GM12878 (cell line): ENCODE measurements at regions of chr18 and their contacts with region 1.

Region 1: DNA sequence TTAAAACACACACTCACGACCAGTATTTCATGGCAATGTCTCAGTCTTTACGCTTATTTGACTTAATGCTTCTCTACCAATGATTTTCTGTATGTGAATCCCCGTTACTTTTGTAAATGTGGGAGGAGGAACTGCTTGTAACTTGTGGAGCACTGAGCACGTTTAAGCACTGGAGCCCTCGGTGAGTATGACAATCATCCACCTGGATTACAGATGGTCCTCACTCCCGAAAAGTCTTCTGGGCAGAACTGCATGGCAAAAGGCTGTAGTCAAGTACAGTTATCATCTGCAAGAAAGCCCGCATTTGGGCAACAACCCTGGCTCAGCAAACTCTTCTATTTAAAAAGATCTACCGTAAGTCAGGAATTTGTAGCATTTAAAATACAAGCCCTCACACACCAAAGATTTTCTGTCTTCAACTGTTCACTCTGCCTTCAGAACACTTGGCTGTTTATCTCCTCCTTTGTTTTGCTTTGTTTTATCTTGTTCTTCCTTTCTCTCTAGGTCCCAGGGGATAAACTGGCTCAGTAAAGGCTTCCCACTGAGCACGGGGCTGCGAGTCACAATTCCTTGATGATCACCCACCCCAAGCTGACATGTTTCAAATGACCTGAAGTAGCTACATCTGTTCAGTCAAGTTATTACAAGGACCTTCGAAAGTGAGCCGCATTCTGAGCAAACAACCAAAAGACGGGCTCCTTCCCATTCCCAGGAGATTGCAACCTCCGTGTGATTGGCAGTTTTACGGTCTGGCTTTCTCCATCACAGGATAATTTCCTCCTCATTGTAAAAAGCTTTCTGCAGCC is 102.2 kb downstream of the DLGAP1 start:
- DNase-seq: no peak
- ATAC-seq: peak; percentile 8
- H3K4me3 ChIP-seq: no peak overlapping the region
- H3K27ac ChIP-seq: no peak overlapping the region
- H3K4me1 ChIP-seq: no peaks in the 10 kb centered on the region
- H3K27me3 ChIP-seq: no peaks in the 10 kb centered on the region
- CTCF ChIP-seq: no peak
- EP300 ChIP-seq: no peak
- POLR2A ChIP-seq: no peak
- RAD21 ChIP-seq: no peak

Region 2: GRCh38 chr18:4256766-4257417 is 96.1 kb before region 1 on chr18:
- CTCF ChIA-PET with region 1: interaction called, 4 read pairs
- POLR2A ChIA-PET with region 1: no interaction called
- RAD21 ChIA-PET with region 1: interaction called, 7 read pairs
- SMC1A ChIA-PET with region 1: interaction called, 33 read pairs
- in situ Hi-C with region 1: no loop called
- intact Hi-C with region 1: no loop called
- DNase-seq: no peak
- ATAC-seq: peak; percentile 32
- H3K4me3 ChIP-seq: no peak overlapping the region
- H3K27ac ChIP-seq: peak overlapping the region; percentile 20; the same call in 1 of the 2 replicates
- H3K4me1 ChIP-seq: no peaks in the 10 kb centered on the region
- H3K27me3 ChIP-seq: no peaks in the 10 kb centered on the region
- CTCF ChIP-seq: no peak
- EP300 ChIP-seq: no peak
- POLR2A ChIP-seq: no peak
- RAD21 ChIP-seq: no peak

Region 3: GRCh38 chr18:4276953-4277585 is 75.9 kb before region 1 on chr18:
- CTCF ChIA-PET with region 1: interaction called, 4 read pairs
- POLR2A ChIA-PET with region 1: interaction called, 4 read pairs
- RAD21 ChIA-PET with region 1: interaction called, 10 read pairs
- SMC1A ChIA-PET with region 1: interaction called, 10 read pairs
- in situ Hi-C with region 1: no loop called
- intact Hi-C with region 1: no loop called
- DNase-seq: no peak
- ATAC-seq: peak; percentile 85
- H3K4me3 ChIP-seq: no peak overlapping the region
- H3K27ac ChIP-seq: no peak overlapping the region
- H3K4me1 ChIP-seq: no peaks in the 10 kb centered on the region
- H3K27me3 ChIP-seq: no peaks in the 10 kb centered on the region
- CTCF ChIP-seq: no peak
- EP300 ChIP-seq: peak; percentile 90 to 94; a peak in 3 of 4 replicates
- POLR2A ChIP-seq: no peak
- RAD21 ChIP-seq: no peak

Region 4: DNA sequence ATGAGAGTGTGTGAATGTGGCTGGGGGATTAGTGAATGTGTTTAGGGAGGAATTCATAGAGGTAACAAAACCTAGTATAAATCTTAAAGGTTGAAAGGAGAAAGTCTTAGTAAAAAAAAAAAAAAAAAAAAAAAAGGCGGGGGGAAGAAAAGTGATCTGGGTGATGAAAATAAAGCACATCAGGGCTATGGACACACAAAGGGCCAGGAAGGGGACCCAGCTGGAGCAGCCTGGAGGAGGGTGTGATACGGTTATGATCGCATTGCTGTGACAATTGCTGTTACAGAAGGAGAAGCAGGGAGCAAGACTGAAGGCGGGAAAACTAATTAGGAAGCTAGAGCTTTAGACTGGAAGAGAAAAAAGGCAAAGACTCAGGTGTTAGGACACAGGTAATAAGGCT is 16.8 kb after region 1 on chr18:
- CTCF ChIA-PET with region 1: interaction called, 4 read pairs
- POLR2A ChIA-PET with region 1: interaction called, 5 read pairs
- RAD21 ChIA-PET with region 1: interaction called, 12 read pairs
- SMC1A ChIA-PET with region 1: interaction called, 6 read pairs
- in situ Hi-C with region 1: no loop called
- intact Hi-C with region 1: no loop called
- DNase-seq: no peak
- ATAC-seq: no peak
- H3K4me3 ChIP-seq: no peak overlapping the region
- H3K27ac ChIP-seq: no peak overlapping the region
- H3K4me1 ChIP-seq: no peaks in the 10 kb centered on the region
- H3K27me3 ChIP-seq: no peaks in the 10 kb centered on the region
- CTCF ChIP-seq: no peak
- EP300 ChIP-seq: no peak
- POLR2A ChIP-seq: no peak
- RAD21 ChIP-seq: no peak

Region 5: DNA sequence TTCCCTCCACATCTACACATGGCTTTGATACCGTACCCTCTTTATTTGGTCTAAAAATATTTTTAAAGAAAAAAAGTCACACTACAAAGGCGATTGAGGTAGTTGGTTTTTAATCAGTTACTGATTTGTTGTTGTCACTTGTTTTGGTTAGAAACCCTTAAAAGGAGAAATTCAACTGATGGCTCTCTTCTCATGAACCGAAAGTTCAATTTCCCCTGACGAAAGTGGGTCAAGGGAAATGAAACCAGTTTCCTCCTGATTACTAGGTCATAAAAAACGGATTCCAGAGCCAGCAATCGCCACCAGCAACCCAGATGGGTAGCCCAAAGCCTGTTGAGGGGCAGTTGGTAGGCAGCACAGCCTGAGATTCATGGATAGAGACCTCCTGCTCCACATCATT is 38.9 kb after region 1 on chr18:
- CTCF ChIA-PET with region 1: interaction called, 3 read pairs
- POLR2A ChIA-PET with region 1: interaction called, 6 read pairs
- RAD21 ChIA-PET with region 1: interaction called, 19 read pairs
- SMC1A ChIA-PET with region 1: interaction called, 21 read pairs
- in situ Hi-C with region 1: no loop called
- intact Hi-C with region 1: loop called (anchors 5 kb)
- DNase-seq: peak; percentile 60
- ATAC-seq: peak; percentile 65
- H3K4me3 ChIP-seq: no peak overlapping the region
- H3K27ac ChIP-seq: 0 out of 2 replicates have a peak overlapping the region, but pooled peaks have one; percentile 20
- H3K4me1 ChIP-seq: no peaks in the 10 kb centered on the region
- H3K27me3 ChIP-seq: no peaks in the 10 kb centered on the region
- CTCF ChIP-seq: no peak
- EP300 ChIP-seq: peak; percentile 96 to 99
- POLR2A ChIP-seq: no peak
- RAD21 ChIP-seq: no peak

Region 6: DNA sequence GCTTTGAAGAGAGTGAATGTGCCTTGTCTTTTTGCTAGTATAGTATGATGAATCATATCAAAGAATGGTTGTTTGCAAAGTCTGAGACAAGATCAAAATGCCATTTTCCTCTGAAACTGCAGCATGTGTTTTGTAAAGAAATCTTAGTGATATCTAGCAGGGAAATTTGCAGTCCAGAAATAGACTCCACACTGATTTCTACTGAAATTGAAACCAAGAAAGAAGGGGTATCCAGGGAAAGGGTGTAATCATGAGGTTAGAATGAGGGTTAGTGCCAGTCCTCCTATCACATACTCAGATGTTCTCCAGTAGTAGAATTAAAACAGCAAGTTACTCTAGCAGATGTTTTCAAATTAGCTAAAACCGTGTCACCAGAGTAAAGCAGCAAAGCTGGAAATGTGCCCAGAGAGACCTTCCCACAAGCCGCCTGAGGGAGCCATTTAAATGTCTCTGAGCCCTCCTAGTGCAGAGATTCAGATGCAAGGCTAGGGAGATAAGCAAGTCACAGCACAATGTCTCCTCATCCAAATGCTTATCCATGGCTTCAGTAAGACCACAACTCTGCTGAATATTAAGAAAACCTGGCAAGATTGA is 97.2 kb after region 1 on chr18:
- CTCF ChIA-PET with region 1: no interaction called
- POLR2A ChIA-PET with region 1: interaction called, 4 read pairs
- RAD21 ChIA-PET with region 1: interaction called, 8 read pairs
- SMC1A ChIA-PET with region 1: interaction called, 16 read pairs
- in situ Hi-C with region 1: no loop called
- intact Hi-C with region 1: no loop called
- DNase-seq: no peak
- ATAC-seq: peak; percentile 13
- H3K4me3 ChIP-seq: no peak overlapping the region
- H3K27ac ChIP-seq: no peak overlapping the region
- H3K4me1 ChIP-seq: no peaks in the 10 kb centered on the region
- H3K27me3 ChIP-seq: no peaks in the 10 kb centered on the region
- CTCF ChIP-seq: peak in 2 of 3 experiments; percentile 4 to 43; a peak in 2 of 6 replicates
- EP300 ChIP-seq: no peak
- POLR2A ChIP-seq: no peak
- RAD21 ChIP-seq: no peak